GM12878 (cell line): ENCODE measurements at regions of chr17 and their contacts with region 1.

Region 1: DNA sequence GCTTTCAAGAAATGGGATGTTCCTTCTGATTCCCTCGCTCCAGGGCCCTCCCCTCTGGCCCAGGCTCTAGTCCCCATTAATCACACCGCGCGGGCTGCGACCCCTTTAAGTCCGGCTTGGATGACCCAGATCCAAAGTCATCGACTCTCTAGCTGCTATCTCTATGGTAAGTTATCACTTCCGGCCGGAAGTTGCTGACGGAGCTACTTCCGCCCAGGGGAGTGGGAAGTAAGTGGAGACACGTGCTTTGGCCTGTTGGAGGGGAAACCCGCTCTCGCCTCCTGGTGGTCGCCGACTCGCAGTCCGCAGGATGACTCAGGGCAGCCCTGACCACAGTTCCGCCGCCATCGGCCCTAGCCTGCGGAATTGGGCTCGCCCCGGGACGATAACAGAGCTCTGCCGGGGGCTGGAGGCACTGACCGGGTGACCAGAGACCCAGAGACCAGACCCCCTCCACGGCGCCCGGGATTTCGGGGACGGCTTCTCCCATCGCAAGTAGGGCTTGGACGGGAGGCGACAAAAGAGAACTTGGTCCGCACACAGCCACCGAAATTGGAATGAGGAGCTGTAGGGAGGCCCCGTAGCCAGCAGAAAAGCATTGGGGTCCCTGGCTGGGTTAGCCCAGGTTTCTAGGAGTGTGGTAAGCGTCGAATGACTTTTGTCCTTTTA is 52.2 kb upstream of the SEC14L1 start:
- DNase-seq: peak; percentile 87
- ATAC-seq: peak; percentile 93
- H3K4me3 ChIP-seq: peak overlapping the region; percentile 91
- H3K27ac ChIP-seq: peak overlapping the region; percentile 91
- H3K4me1 ChIP-seq: peaks cover 23% of the 10 kb centered on the region
- H3K27me3 ChIP-seq: no peaks in the 10 kb centered on the region
- CTCF ChIP-seq: peak; percentile 61 to 77 (median 66)
- EP300 ChIP-seq: peak; percentile 31 to 39; a peak in 1 of 4 replicates
- POLR2A ChIP-seq: peak; percentile 93
- RAD21 ChIP-seq: 0 out of 2 replicates have a peak, but pooled peaks have one; percentile 22

Region 2: GRCh38 chr17:76737082-76737675 is 351.4 kb before region 1 on chr17 and contains the start of gene SRSF2:
- CTCF ChIA-PET with region 1: interaction called, 3 read pairs
- POLR2A ChIA-PET with region 1: no interaction called
- RAD21 ChIA-PET with region 1: no interaction called
- SMC1A ChIA-PET with region 1: no interaction called
- in situ Hi-C with region 1: no loop called
- intact Hi-C with region 1: loop called (anchors 10 kb)
- DNase-seq: peak; percentile 87
- ATAC-seq: peak; percentile 80
- H3K4me3 ChIP-seq: peak within 1 kb of the TSS; percentile 92
- H3K27ac ChIP-seq: peak within 1 kb of the TSS; percentile 91
- H3K4me1 ChIP-seq: no peaks in the 10 kb centered on the region; the same call in none of the 2 replicates
- H3K27me3 ChIP-seq: no peaks in the 10 kb centered on the region
- CTCF ChIP-seq: no peak
- EP300 ChIP-seq: no peak
- POLR2A ChIP-seq: peak; percentile 96
- RAD21 ChIP-seq: no peak
- polyA plus RNA-seq, gene SRSF2: 225 to 363 TPM

Region 3: GRCh38 chr17:77109764-77110359 is 21.3 kb after region 1 on chr17:
- CTCF ChIA-PET with region 1: interaction called, 13 read pairs
- POLR2A ChIA-PET with region 1: interaction called, 7 read pairs
- RAD21 ChIA-PET with region 1: interaction called, 19 read pairs
- SMC1A ChIA-PET with region 1: interaction called, 20 read pairs
- in situ Hi-C with region 1: no loop called
- intact Hi-C with region 1: no loop called
- DNase-seq: peak; percentile 60
- ATAC-seq: peak; percentile 45
- H3K4me3 ChIP-seq: no peak overlapping the region
- H3K27ac ChIP-seq: peak overlapping the region; percentile 2
- H3K4me1 ChIP-seq: peaks cover 41% of the 10 kb centered on the region
- H3K27me3 ChIP-seq: no peaks in the 10 kb centered on the region
- CTCF ChIP-seq: peak in 1 of 3 experiments; percentile 5; a peak in 1 of 6 replicates
- EP300 ChIP-seq: no peak
- POLR2A ChIP-seq: no peak
- RAD21 ChIP-seq: no peak

Region 4: GRCh38 chr17:77120868-77121267 is 32.3 kb after region 1 on chr17:
- CTCF ChIA-PET with region 1: no interaction called
- POLR2A ChIA-PET with region 1: no interaction called
- RAD21 ChIA-PET with region 1: no interaction called
- SMC1A ChIA-PET with region 1: no interaction called
- in situ Hi-C with region 1: no loop called
- intact Hi-C with region 1: no loop called
- DNase-seq: no peak
- ATAC-seq: no peak
- H3K4me3 ChIP-seq: no peak overlapping the region
- H3K27ac ChIP-seq: no peak overlapping the region
- H3K4me1 ChIP-seq: peaks cover 3% of the 10 kb centered on the region; the same call in 1 of the 2 replicates
- H3K27me3 ChIP-seq: no peaks in the 10 kb centered on the region
- CTCF ChIP-seq: no peak
- EP300 ChIP-seq: no peak
- POLR2A ChIP-seq: no peak
- RAD21 ChIP-seq: no peak

Region 5: DNA sequence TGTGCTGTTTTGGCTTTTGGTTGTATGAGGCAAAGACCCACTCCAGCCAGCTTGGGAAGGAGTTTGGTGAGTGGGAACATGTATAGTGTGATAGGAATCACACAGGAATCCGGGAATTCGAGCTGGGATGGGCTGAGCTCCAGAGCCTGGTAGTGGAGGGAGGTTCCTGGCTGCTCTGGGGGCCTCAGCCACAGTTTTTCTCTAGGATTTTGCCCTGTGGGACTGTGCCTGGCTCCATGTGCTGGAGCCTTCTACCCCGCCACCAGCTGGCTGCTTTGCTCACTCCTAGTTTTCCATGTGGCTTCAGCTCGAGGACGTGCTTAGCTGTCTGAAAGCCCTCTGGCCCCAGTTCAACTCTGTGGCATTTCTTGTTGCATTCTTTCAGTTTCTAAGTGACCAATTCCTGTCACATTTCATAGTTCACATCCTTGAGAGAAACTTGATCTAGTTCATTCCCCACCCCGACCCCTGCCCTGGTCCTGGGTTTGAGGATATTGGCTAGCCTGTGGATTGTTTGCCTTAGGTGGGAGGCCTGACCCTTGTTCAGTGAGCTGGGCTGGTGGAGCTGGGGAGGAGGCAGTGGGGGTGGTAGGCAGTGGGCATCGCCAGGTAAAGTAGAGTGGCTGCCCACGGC is 57.1 kb after region 1 on chr17:
- CTCF ChIA-PET with region 1: interaction called, 14 read pairs
- POLR2A ChIA-PET with region 1: interaction called, 14 read pairs
- RAD21 ChIA-PET with region 1: interaction called, 9 read pairs
- SMC1A ChIA-PET with region 1: interaction called, 12 read pairs
- in situ Hi-C with region 1: no loop called
- intact Hi-C with region 1: loop called (anchors 2 kb)
- DNase-seq: peak; percentile 71
- ATAC-seq: peak; percentile 63
- H3K4me3 ChIP-seq: peak overlapping the region; percentile 69
- H3K27ac ChIP-seq: peak overlapping the region; percentile 97
- H3K4me1 ChIP-seq: peaks cover 43% of the 10 kb centered on the region
- H3K27me3 ChIP-seq: no peaks in the 10 kb centered on the region
- CTCF ChIP-seq: peak in 2 of 3 experiments; percentile 8 to 22; a peak in 1 of 6 replicates
- EP300 ChIP-seq: peak in 1 of 2 experiments; percentile 56; a peak in 2 of 4 replicates
- POLR2A ChIP-seq: 0 out of 2 replicates have a peak, but pooled peaks have one; percentile 32
- RAD21 ChIP-seq: no peak

Region 6: GRCh38 chr17:77235370-77235941 is 146.9 kb after region 1 on chr17:
- CTCF ChIA-PET with region 1: interaction called, 10 read pairs
- POLR2A ChIA-PET with region 1: no interaction called
- RAD21 ChIA-PET with region 1: interaction called, 10 read pairs
- SMC1A ChIA-PET with region 1: interaction called, 15 read pairs
- in situ Hi-C with region 1: no loop called
- intact Hi-C with region 1: no loop called
- DNase-seq: peak; percentile 34
- ATAC-seq: peak; percentile 62
- H3K4me3 ChIP-seq: no peak overlapping the region
- H3K27ac ChIP-seq: peak overlapping the region; percentile 74
- H3K4me1 ChIP-seq: peaks cover 25% of the 10 kb centered on the region
- H3K27me3 ChIP-seq: no peaks in the 10 kb centered on the region
- CTCF ChIP-seq: no peak
- EP300 ChIP-seq: no peak
- POLR2A ChIP-seq: no peak
- RAD21 ChIP-seq: no peak

Region 7: GRCh38 chr17:77319211-77320043 is 230.8 kb after region 1 on chr17:
- CTCF ChIA-PET with region 1: interaction called, 3 read pairs
- POLR2A ChIA-PET with region 1: no interaction called
- RAD21 ChIA-PET with region 1: interaction called, 3 read pairs
- SMC1A ChIA-PET with region 1: no interaction called
- in situ Hi-C with region 1: no loop called
- intact Hi-C with region 1: loop called (anchors 5 kb)
- DNase-seq: no peak
- ATAC-seq: peak; percentile 43
- H3K4me3 ChIP-seq: peak overlapping the region; percentile 84
- H3K27ac ChIP-seq: peak overlapping the region; percentile 88
- H3K4me1 ChIP-seq: peaks cover 50% of the 10 kb centered on the region
- H3K27me3 ChIP-seq: no peaks in the 10 kb centered on the region
- CTCF ChIP-seq: no peak
- EP300 ChIP-seq: peak in 1 of 2 experiments; percentile 46; a peak in 1 of 4 replicates
- POLR2A ChIP-seq: peak; percentile 82
- RAD21 ChIP-seq: no peak